Activated B cell treated with CpG ODN at 0.5 μM for 24 hours (primary cell): ENCODE measurements at regions of chr9 and their contacts with region 1.

Region 1: GRCh38 chr9:113622600-113623400 is 159.3 kb downstream of the RGS3 start:
- DNase-seq: peak; percentile 57
- ATAC-seq: peak; percentile 90
- H3K4me3 Mint-ChIP-seq: peak overlapping the region; percentile 58
- H3K27ac Mint-ChIP-seq: peak overlapping the region; percentile 67
- H3K4me1 Mint-ChIP-seq: peaks cover 44% of the 10 kb centered on the region
- H3K27me3 Mint-ChIP-seq: no peaks in the 10 kb centered on the region
- CTCF ChIP-seq: no peak

Region 2: DNA sequence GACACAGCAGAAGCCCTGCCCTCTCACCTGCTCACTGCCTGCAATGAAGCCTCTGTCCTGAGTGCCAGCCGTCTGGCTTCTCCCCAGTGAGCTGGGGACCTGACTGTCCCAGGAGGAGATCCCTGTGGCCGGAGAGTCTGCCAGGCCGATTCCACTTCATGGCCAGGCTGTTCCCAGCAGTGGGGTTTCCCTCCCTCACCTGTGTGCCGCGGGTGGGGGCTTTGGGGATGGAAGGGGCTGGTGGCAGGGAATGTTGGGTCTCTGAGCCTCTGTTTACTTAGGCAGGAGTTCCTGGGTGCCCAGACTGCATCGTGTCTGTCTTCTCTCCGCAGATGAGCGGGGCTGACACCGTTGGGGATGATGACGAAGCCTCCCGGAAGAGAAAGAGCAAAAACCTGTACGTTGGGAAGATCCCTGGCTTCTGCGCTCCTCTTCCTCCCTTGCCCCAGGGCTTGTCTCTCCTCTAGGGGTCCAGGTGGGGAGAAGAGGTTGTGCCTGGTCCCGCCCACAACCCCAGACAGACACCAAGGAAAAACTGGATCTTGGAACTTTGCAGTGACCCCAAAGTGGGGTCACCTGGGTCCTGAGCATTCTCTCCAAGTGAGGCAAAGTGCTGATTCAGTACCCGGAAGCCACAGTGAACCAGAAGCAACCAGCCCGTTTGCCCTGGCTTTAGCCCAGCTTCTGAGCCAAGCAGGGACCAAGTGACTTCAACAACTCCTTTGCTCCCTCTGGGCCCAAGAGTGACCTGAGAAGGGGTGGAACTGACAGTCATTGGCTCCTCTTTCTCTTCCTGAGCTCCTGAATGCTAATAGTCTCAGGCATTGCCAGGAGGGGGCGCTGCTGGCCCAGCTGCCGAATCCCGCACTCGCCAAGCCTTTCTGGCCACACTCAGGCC is 31.6 kb before region 1 on chr9:
- CTCF ChIA-PET with region 1: interaction called, 5 read pairs
- POLR2A ChIA-PET with region 1: no interaction called
- intact Hi-C with region 1: loop called (anchors 2 kb)
- DNase-seq: peak; percentile 67
- ATAC-seq: peak; percentile 71
- H3K4me3 Mint-ChIP-seq: no peak overlapping the region
- H3K27ac Mint-ChIP-seq: no peak overlapping the region
- H3K4me1 Mint-ChIP-seq: peaks cover 14% of the 10 kb centered on the region
- H3K27me3 Mint-ChIP-seq: no peaks in the 10 kb centered on the region
- CTCF ChIP-seq: no peak

Region 3: GRCh38 chr9:113602126-113603044 is 20.4 kb before region 1 on chr9:
- CTCF ChIA-PET with region 1: no interaction called
- POLR2A ChIA-PET with region 1: interaction called, 3 read pairs
- intact Hi-C with region 1: loop called (anchors 1 kb)
- DNase-seq: no peak
- ATAC-seq: peak; percentile 89
- H3K4me3 Mint-ChIP-seq: no peak overlapping the region
- H3K27ac Mint-ChIP-seq: no peak overlapping the region
- H3K4me1 Mint-ChIP-seq: peaks cover 12% of the 10 kb centered on the region
- H3K27me3 Mint-ChIP-seq: peaks cover 2% of the 10 kb centered on the region
- CTCF ChIP-seq: no peak

Region 4: DNA sequence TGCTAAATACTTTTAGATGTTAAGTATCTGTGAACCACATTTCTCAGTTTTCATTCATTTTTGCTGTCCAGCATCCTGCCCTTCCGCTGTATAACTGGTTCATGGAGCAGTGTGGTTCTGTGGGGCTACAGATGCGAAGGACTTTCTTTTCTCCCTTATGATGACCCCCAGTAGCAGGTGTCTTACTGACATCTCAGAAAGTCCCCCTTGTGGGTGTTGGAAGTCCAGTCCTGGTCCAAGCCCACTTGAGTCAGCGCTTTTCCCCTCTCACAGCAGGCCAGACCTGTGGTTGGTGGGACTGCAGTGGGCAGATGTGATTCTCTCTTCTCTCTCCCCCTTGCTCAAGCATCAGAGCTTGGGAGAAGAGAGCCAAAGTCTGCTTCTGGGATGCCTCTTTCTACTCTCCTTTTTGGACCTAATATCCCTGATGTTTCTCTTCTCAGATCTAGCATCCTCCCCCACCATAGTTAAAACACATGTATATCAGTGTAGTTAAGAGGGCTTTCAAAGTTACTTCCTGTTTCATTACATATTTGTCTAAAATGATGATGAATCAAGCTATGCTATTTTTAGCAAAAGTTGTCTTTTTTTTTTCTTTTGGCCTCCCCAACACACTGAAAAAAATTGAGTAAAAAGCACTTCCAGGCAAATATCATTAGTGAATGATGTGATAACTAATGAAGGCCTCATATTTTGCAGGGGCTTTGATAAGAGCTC is 133.8 kb after region 1 on chr9:
- CTCF ChIA-PET with region 1: no interaction called
- POLR2A ChIA-PET with region 1: no interaction called
- intact Hi-C with region 1: no loop called
- DNase-seq: no peak
- ATAC-seq: no peak
- H3K4me3 Mint-ChIP-seq: no peak overlapping the region
- H3K27ac Mint-ChIP-seq: no peak overlapping the region
- H3K4me1 Mint-ChIP-seq: peaks cover 6% of the 10 kb centered on the region
- H3K27me3 Mint-ChIP-seq: peaks cover 35% of the 10 kb centered on the region
- CTCF ChIP-seq: no peak